ENCODE measurements at regions of chr3 and their contacts with region 1.

Region 1: DNA sequence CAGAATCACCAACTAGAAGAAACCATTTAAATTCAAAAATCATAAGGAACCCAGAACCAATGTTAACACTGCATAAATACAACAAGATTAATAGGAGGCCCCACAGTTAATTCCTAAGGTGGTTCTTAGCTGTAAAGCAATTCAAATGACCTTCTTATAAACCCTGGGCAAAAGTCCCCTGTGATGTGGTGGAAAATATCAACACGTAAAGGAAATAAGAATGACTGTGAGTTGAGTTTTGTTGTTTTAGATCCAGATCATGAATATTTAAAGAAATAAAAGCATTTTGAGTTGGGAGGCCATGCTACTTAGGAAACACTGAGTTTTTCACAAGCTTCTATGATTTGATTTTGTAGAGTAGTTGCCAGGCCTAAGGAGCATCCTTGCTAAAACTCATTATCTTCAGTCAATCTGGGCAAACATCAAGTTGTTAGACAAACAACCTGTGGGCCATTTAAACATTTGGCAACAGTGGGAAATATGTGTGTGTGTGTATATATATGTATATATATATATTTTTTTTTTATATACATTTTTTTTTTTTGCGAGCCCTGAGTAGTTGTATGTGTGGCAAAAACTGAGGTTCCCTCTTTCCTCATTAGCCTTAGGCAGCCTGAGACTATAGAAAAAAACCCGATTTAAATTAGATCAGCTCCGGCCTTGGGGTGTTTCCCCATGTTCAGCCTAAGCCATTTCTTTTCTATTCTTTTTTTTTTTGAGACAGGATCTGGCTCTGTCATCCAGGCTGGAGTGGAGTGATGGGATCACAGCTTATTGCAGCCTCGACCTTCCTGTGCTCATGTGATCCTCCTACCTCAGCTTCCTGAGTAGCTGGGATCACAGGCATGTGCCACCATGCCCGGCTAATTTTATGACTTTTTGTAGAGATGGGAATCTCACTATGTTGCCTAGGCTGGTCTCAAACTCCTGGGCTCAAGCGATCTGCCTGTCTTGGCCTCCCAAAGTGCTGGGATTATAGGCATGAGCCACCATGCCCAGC is 8.0 kb upstream of the PXK start:
- DNase-seq: no peak
- ATAC-seq: peak; percentile 8
- H3K4me3 ChIP-seq: no peak overlapping the region
- H3K4me1 ChIP-seq: peaks cover 12% of the 10 kb centered on the region
- CTCF ChIP-seq: no peak

Region 2: DNA sequence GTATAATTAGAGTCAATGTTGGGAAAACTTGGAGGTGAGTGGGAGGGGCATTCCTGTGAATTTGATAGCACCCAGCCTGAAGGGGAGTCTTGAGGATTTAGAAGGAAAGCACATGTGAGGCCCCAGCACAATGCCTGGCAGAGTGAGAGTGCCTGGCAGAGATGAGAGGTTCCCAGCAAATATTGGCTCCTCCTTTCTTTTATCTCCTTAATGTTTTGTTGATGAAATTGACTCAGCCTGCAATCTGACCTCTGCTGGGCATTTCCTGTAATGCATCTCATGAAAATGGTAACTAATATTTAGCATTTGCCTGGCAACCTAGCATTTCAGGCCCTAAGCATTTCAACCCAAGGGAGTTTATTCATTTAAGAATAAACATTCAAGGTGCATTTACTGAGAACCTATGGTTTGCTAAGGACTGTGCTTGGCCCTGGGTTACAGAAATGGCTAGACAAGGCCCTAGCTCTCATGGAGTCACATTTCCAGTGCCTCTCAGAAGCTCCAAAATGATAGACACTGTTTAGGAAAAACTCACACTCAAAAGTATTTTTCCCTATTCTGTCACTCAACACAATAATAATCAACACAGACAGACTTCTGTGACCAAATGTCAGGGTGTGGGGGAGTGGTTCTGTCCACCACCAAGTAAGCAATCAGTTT is 90.0 kb after region 1 on chr3:
- intact Hi-C with region 1: loop called (anchors 5 kb)
- DNase-seq: peak in 1 of 3 donors; percentile 80
- ATAC-seq: peak; percentile 59
- H3K4me3 ChIP-seq: no peak overlapping the region
- H3K4me1 ChIP-seq: peaks cover 8% of the 10 kb centered on the region
- CTCF ChIP-seq: peak; percentile 45